B cell (primary cell): ENCODE measurements at regions of chr22 and their contacts with region 1.

Region 1: GRCh38 chr22:45318168-45318557 is 8.4 kb downstream of the FAM118A start:
- DNase-seq: peak; percentile 89
- ATAC-seq: peak; percentile 88
- H3K4me3 ChIP-seq: peak overlapping the region in 4 of 5 experiments; percentile 9 to 17 (median 16)
- H3K4me3 Mint-ChIP-seq: peak overlapping the region; percentile 89
- H3K27ac ChIP-seq: peak overlapping the region; percentile 89 to 97
- H3K27ac Mint-ChIP-seq: peak overlapping the region; percentile 97
- H3K4me1 ChIP-seq: peaks cover 25 to 28% of the 10 kb centered on the region in 2 donors
- H3K4me1 Mint-ChIP-seq: peaks cover 44% of the 10 kb centered on the region
- H3K27me3 ChIP-seq: no peaks in the 10 kb centered on the region
- H3K27me3 Mint-ChIP-seq: no peaks in the 10 kb centered on the region
- CTCF ChIP-seq: no peak

Region 2: GRCh38 chr22:45163451-45164269 is 154.5 kb before region 1 on chr22 and contains the start of gene NUP50:
- CTCF ChIA-PET with region 1: no interaction called
- POLR2A ChIA-PET with region 1: no interaction called
- intact Hi-C with region 1: loop called (anchors 1 kb)
- DNase-seq: peak; percentile 99
- ATAC-seq: peak; percentile 79
- H3K4me3 ChIP-seq: peak within 1 kb of the TSS; percentile 76 to 89 (median 82)
- H3K4me3 Mint-ChIP-seq: peak within 1 kb of the TSS; percentile 92
- H3K27ac ChIP-seq: peak within 1 kb of the TSS; percentile 81 to 94
- H3K27ac Mint-ChIP-seq: peak within 1 kb of the TSS; percentile 94
- H3K4me1 ChIP-seq: peaks cover 19 to 23% of the 10 kb centered on the region in 2 donors
- H3K4me1 Mint-ChIP-seq: peaks cover 47% of the 10 kb centered on the region
- H3K27me3 ChIP-seq: no peaks in the 10 kb centered on the region
- H3K27me3 Mint-ChIP-seq: no peaks in the 10 kb centered on the region
- CTCF ChIP-seq: no peak
- total RNA-seq, gene NUP50: 105 and 108 TPM in 2 replicates

Region 3: DNA sequence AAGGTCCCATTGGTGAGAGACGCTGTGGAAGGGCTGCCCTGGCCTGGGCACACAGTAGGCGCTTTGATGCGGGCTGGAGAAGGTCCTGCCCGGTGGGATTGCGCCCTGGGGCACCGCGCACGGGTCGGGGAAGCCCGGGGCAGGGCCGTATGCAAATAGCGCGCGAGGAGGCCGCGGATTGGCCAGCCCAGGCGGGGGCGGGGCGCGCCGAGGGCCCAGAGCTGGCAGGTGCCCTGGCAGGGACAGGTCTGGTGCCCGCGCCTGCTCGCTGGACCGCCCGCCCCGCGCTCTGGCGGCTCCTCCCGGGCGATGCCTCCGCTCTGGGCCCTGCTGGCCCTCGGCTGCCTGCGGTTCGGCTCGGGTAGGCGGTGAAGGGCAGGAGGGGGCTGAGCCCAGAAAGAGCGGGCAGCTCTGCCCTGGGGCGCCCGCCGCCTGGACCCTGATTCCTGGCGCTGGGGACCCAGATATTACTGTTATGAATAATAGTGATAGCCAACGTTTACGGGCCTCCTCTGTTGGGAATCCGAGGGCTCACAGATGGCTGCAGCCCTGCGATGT is 33.4 kb before region 1 on chr22 and contains the start of gene UPK3A:
- CTCF ChIA-PET with region 1: no interaction called
- POLR2A ChIA-PET with region 1: interaction called, 3 read pairs
- intact Hi-C with region 1: loop called (anchors 2 kb)
- DNase-seq: peak; percentile 85
- ATAC-seq: peak; percentile 90
- H3K4me3 ChIP-seq: peak within 1 kb of the TSS; percentile 15 to 45 (median 31)
- H3K4me3 Mint-ChIP-seq: peak within 1 kb of the TSS; percentile 59
- H3K27ac ChIP-seq: no peak within 1 kb of the TSS
- H3K27ac Mint-ChIP-seq: peak within 1 kb of the TSS; percentile 53
- H3K4me1 ChIP-seq: peaks cover 40 to 56% of the 10 kb centered on the region in 2 donors
- H3K4me1 Mint-ChIP-seq: peaks cover 41% of the 10 kb centered on the region
- H3K27me3 ChIP-seq: no peaks in the 10 kb centered on the region
- H3K27me3 Mint-ChIP-seq: no peaks in the 10 kb centered on the region
- CTCF ChIP-seq: no peak
- total RNA-seq, gene UPK3A: not detected in 2 replicates

Region 4: DNA sequence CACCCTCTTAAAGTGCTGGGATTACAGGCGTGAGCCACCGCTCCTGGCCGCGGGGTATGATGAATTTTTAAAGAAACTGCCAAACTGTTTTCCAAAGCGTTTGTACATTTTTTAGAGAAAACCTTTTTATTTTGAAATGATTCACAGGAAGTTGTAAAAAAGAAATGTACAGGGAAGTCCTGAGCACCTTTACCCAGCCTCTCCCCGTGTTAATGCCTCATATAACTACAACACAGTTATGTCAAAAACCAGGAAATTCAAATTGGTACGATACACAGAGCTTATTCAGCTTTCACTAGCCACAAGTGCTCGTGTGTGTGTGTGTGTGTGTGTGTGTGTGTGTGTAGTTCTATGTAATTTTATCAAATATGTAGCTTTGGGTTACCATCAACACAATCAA is 15.4 kb before region 1 on chr22:
- CTCF ChIA-PET with region 1: no interaction called
- POLR2A ChIA-PET with region 1: no interaction called
- intact Hi-C with region 1: no loop called
- DNase-seq: no peak
- ATAC-seq: no peak
- H3K4me3 ChIP-seq: no peak overlapping the region
- H3K4me3 Mint-ChIP-seq: no peak overlapping the region
- H3K27ac ChIP-seq: no peak overlapping the region
- H3K27ac Mint-ChIP-seq: no peak overlapping the region
- H3K4me1 ChIP-seq: no peaks in the 10 kb centered on the region
- H3K4me1 Mint-ChIP-seq: peaks cover 5% of the 10 kb centered on the region
- H3K27me3 ChIP-seq: no peaks in the 10 kb centered on the region
- H3K27me3 Mint-ChIP-seq: no peaks in the 10 kb centered on the region
- CTCF ChIP-seq: no peak

Region 5: DNA sequence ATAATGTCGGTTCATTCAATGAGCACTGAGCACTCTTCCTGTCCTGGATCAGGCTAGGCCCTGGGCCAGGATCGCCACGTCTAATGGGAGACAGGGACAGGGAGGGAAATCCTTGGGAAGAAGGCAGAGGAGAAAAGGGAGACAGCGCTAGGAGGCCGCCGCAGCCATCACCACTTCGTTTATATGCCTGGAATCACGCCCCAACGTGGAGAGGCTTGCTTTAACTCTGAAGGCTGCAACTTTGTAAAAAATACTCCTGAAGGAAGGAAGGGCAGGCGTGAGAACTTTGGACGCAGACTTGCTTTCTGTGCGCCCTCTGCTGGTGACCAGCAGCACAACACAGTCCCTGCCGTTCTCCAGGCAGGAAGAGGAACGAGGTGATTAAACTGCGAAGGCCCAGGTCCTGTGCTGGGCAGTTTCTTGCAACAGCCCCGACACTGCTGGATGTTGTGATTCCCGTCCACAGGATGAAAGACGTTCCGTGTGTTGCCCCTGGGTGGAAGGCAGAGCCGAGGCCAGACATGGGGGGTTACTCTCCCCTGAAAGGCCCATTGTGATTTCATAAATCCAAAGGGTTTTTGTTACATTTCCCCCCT is 117.5 kb after region 1 on chr22:
- CTCF ChIA-PET with region 1: interaction called, 3 read pairs
- POLR2A ChIA-PET with region 1: no interaction called
- intact Hi-C with region 1: loop called (anchors 5 kb)
- DNase-seq: peak; percentile 87
- ATAC-seq: peak; percentile 95
- H3K4me3 ChIP-seq: no peak overlapping the region
- H3K4me3 Mint-ChIP-seq: no peak overlapping the region
- H3K27ac ChIP-seq: no peak overlapping the region
- H3K27ac Mint-ChIP-seq: peak overlapping the region; percentile 32
- H3K4me1 ChIP-seq: peaks cover 2 to 8% of the 10 kb centered on the region in 2 donors
- H3K4me1 Mint-ChIP-seq: peaks cover 16% of the 10 kb centered on the region
- H3K27me3 ChIP-seq: no peaks in the 10 kb centered on the region
- H3K27me3 Mint-ChIP-seq: peaks cover 4% of the 10 kb centered on the region
- CTCF ChIP-seq: peak; percentile 99